Pancreas (tissue), 10 donors: ENCODE measurements at regions of chr1 and their contacts with region 1.

Region 1: DNA sequence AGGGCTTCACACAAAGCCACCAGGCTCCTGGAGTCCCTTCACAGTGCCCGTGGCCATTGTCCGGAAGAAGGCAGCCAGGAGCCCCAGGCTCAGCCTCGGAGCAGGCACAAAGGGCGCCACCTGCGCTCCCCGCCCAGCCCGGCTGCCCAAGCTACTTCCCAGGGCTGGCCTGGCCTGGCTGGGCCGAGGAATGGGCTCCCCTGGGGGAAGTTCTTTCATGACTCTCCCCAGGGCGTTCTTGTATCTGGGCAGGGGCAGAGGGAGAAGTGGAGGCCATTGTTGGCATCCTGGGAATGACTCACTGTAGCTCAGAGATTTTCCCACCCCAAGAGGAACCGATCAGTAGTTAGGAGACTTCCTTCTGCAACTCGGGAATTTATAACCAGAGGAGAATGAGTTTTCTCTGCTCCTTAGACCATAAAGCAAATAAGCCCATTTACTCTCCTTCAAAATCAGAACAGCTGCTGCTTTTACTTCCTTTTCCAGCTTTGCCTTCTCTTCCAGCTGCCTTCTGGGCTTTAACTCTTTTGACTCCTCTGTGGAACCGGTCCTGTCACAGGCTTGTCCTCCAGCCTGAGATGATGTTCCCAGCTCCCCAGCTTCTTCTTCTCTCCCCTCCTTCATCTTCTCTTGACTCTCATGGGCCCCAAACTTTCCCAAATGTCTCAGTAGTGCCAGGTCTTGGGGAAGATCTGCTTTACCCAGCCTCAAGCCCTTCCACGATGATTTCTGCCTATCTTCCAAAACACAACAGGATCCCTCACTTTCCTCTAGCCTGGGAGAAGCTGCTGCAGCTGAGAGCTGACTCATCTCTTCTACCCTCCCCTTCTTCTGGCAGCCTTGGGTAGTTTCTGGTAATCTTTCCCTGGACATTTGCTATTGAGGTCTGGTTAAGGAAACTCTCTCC is 118.7 kb upstream of the CD34 start:
- DNase-seq: no peak
- ATAC-seq: peak in 3 of 4 donors; percentile 21 to 49 (median 33)
- H3K4me3 ChIP-seq: no peak overlapping the region
- H3K27ac ChIP-seq: peak overlapping the region; percentile 1 to 26 (median 14)
- H3K4me1 ChIP-seq: no peaks in the 10 kb centered on the region
- H3K27me3 ChIP-seq: no peaks in the 10 kb centered on the region
- CTCF ChIP-seq: no peak

Region 2: GRCh38 chr1:208093754-208094719 is 64.4 kb after region 1 on chr1:
- intact Hi-C with region 1: loop called in 2 of 3 experiments (anchors 5 kb)
- DNase-seq: peak in 5 of 6 donors; percentile 40 to 85 (median 62)
- ATAC-seq: peak; percentile 52 to 87 (median 82)
- H3K4me3 ChIP-seq: no peak overlapping the region
- H3K27ac ChIP-seq: no peak overlapping the region
- H3K4me1 ChIP-seq: no peaks in the 10 kb centered on the region
- H3K27me3 ChIP-seq: no peaks in the 10 kb centered on the region
- CTCF ChIP-seq: peak; percentile 50 to 71 (median 65)

Region 3: GRCh38 chr1:208245185-208245705 is 215.6 kb after region 1 on chr1:
- intact Hi-C with region 1: loop called in 2 of 3 experiments (anchors 5 to 10 kb)
- DNase-seq: peak; percentile 84 to 90 (median 88)
- ATAC-seq: peak; percentile 65 to 86 (median 74)
- H3K4me3 ChIP-seq: peak overlapping the region in 2 of 4 donors; percentile 96 to 98
- H3K27ac ChIP-seq: peak overlapping the region; percentile 53 to 89 (median 83)
- H3K4me1 ChIP-seq: peaks cover 0 to 7% (median 0%) of the 10 kb centered on the region in 3 donors
- H3K27me3 ChIP-seq: no peaks in the 10 kb centered on the region
- CTCF ChIP-seq: peak; percentile 64 to 81 (median 72)